Aorta (tissue), 5 donors: ENCODE measurements at regions of chr3 and their contacts with region 1.

Region 1: DNA sequence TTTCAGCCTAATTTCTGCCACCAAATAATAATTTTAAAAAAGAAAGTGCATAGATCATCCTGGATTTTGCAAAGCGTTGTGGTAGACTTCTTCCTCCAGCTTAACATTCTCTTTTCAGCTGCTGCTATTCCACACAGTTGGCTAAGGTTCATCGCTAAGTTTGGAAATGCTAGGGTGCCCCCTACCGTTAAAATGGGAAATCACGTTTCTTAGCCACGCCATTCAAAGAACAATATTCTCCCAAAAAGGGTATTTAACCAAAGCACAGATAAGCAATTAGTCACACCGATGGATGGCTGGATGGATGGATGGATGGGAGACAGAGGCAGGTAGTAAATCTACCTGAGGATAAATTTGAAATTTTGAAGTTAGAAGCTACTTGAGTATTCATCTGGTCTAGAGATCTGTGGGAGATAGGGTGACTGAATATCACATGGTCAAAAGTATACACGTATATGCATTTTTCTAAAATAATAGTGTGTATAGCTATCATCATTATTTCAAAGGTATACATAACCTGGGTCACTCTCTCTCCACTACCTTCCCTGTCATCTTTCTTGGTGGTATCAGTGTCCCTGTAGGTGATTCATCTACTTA is 67.2 kb downstream of the EFHB start:
- DNase-seq: no peak
- ATAC-seq: peak; percentile 83
- H3K4me3 ChIP-seq: no peak overlapping the region
- H3K27ac ChIP-seq: no peak overlapping the region
- H3K4me1 ChIP-seq: no peaks in the 10 kb centered on the region
- H3K27me3 ChIP-seq: no peaks in the 10 kb centered on the region

Region 2: DNA sequence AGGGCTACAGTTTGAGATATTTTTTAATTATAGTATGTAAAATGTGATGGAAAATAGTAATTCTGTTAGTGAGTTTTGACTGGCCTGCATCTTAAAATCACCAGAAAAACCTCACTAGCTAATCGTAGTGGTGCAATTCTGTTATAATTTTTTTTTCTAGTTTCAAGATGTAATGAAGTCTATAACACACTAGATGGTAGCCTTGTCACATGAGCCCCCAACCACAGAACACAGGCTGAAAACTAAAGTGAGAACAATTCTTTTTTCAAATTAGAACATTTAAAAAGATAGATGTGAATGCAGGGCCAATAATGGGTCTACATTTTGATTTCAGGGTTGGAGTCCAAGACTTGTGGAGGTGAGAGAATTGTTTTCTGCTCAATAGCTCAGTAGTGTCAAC is 801.8 kb before region 1 on chr3:
- intact Hi-C with region 1: loop called (anchors 5 kb)
- DNase-seq: no peak
- ATAC-seq: no peak
- H3K4me3 ChIP-seq: no peak overlapping the region
- H3K27ac ChIP-seq: no peak overlapping the region
- H3K4me1 ChIP-seq: no peaks in the 10 kb centered on the region
- H3K27me3 ChIP-seq: no peaks in the 10 kb centered on the region

Region 3: DNA sequence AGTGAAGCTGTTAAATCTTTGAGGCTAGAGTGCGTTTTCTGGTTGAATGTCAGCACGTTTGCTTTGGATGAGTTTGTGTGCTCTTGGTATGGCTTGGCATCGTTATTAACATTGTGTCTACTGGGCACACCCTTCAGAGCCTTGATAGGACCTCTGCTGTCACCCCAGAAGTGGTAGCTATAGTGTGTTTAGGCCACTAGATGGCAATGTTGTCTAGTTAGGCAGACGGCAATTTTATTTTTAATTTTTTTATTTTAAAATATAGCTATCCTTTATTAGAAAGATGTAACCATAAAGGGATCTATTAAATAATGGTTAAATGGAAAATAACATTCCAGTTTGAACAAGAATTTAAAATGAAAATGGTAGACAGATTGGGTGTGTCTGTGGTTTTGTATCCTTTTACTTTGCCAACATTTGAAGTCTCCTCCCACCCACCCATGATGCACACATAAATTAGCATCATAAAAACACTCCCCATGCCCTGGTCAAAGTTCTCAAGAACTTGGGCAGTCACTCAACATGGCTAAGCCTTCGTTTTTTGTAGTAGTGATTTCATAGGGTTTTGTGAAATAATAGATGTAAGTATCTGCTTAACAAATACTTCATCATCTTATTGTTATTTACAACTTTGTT is 517.8 kb before region 1 on chr3:
- intact Hi-C with region 1: loop called (anchors 2 to 5 kb)
- DNase-seq: no peak
- ATAC-seq: peak; percentile 63
- H3K4me3 ChIP-seq: no peak overlapping the region
- H3K27ac ChIP-seq: no peak overlapping the region
- H3K4me1 ChIP-seq: peaks cover 0 to 2% of the 10 kb centered on the region in 2 donors
- H3K27me3 ChIP-seq: no peaks in the 10 kb centered on the region

Region 4: DNA sequence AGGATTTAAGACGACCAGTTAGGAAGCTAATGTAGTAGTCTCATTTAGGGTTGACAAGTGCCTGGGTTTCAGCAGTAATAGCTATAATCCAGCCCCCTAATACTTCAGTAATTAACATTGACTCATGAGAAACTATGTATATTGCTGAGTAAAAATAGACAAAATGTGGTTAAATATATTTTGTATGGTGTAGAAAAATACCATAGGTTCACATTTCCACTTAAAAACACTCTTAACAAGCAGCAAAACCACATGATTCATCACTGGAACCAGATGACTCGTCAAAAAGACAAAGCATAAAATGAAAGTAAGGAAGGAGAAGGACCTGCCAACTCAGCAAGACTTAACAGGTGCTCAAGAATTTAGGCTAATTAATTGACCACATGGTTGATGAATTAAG is 221.8 kb before region 1 on chr3:
- intact Hi-C with region 1: no loop called
- DNase-seq: no peak
- ATAC-seq: no peak
- H3K4me3 ChIP-seq: no peak overlapping the region
- H3K27ac ChIP-seq: no peak overlapping the region
- H3K4me1 ChIP-seq: no peaks in the 10 kb centered on the region
- H3K27me3 ChIP-seq: no peaks in the 10 kb centered on the region

Region 5: GRCh38 chr3:19811689-19812088 is 55.2 kb before region 1 on chr3:
- intact Hi-C with region 1: no loop called
- DNase-seq: no peak
- ATAC-seq: no peak
- H3K4me3 ChIP-seq: no peak overlapping the region
- H3K27ac ChIP-seq: no peak overlapping the region
- H3K4me1 ChIP-seq: peaks cover 0 to 2% of the 10 kb centered on the region in 2 donors
- H3K27me3 ChIP-seq: no peaks in the 10 kb centered on the region

Region 6: DNA sequence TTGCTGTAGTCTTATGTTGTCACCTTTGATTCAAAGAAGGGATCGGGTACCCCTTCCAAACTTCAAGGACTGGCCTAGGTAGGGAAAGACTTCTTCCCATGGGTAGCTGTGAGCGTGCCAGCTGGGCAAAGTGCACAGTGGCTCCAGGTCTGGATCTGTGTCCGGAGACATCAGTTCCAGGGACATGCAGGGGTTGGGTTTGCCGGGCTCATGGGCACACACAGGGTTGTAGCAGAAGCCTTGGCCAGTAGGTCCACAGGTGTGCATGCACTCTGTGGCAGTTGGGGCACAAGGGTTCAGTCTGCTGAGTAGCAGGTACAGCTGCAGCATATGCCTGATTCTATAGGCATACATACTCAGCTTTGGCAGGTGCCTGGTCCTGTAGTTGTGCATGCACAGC is 44.0 kb before region 1 on chr3:
- intact Hi-C with region 1: no loop called
- DNase-seq: peak in 1 of 2 donors; percentile 68
- ATAC-seq: no peak
- H3K4me3 ChIP-seq: no peak overlapping the region
- H3K27ac ChIP-seq: no peak overlapping the region
- H3K4me1 ChIP-seq: no peaks in the 10 kb centered on the region
- H3K27me3 ChIP-seq: no peaks in the 10 kb centered on the region